Activated naive CD8-positive, alpha-beta T cell treated with anti-CD3 and anti-CD28 coated beads, Interleukin-2, amount 10 ng/mL, durations not matched to agents 7 days and 5 days (primary cell): ENCODE measurements at regions of chr9 and their contacts with region 1.

Region 1: DNA sequence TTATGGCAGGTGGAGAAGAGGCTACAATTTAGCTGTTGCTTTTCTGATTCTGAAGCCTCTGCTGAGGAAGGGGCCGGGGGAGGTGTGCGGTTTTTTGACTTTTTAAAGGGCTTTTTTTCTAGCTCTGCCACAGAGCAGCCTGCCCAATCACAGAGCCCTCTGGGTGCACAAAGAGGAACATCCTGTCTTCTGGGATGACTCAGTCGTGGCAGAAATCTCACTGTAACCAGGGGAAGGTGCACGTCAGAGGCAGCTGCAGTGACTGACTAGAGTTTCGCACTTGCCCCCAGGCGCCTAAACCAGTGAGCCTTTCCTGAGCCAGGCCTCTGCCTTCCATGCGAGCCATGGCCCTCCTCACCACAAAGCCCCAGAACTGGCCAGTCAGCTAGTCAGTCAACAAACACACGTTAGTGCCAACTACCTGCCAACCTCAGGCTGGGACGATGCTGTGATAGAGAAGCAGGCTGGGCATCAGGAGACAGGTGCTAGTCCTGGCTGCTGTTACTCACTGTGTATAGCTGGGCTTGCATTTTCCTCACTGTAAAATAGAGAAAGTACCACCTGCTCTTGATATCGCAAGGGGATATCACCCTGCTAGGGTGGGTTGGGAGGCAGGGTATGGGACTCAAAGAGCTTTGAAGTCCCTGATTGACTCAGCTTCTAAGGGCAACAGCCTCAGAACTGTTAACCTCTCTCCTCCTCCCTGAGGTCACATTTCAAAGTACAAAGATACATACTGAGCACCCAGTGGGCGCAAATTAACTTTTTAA is 2.2 kb downstream of the AKNA start:
- DNase-seq: peak; percentile 82
- ATAC-seq: peak; percentile 78
- H3K4me3 Mint-ChIP-seq: peak overlapping the region; percentile 99
- H3K27ac Mint-ChIP-seq: peak overlapping the region; percentile 99
- H3K4me1 Mint-ChIP-seq: peaks cover 48% of the 10 kb centered on the region
- H3K27me3 Mint-ChIP-seq: no peaks in the 10 kb centered on the region

Region 2: DNA sequence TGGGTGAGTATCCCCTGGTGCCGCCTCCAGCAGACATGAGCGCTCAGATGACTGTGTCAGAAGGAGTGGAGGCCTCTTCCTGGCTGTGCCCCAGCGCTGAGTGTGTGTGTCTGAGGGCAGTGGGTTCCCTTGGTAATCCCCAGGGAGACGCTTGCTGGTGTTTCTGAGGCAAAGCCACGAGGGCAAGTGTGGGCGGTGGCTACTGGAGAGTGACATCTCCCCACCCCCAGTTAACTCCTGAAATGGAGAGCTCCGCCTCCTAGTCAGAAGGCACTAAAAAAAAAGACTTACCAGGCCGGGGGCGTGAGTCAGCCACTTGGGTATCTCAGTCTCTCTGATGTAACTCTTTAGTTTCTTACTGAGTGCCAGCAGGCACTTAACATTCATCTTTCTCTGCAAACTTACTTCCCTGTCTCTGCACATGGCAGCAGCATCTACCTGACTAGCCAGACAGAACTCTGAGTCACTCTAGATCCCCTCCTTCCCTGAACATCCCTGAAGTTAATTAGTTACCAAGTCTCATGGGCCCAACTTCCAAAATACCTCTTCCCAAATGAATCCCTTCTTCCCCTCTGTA is 36.6 kb before region 1 on chr9:
- POLR2A ChIA-PET with region 1: interaction called, 137 read pairs
- DNase-seq: peak; percentile 65
- ATAC-seq: peak; percentile 77
- H3K4me3 Mint-ChIP-seq: peak overlapping the region; percentile 62
- H3K27ac Mint-ChIP-seq: peak overlapping the region; percentile 95
- H3K4me1 Mint-ChIP-seq: peaks cover 51% of the 10 kb centered on the region
- H3K27me3 Mint-ChIP-seq: no peaks in the 10 kb centered on the region

Region 3: GRCh38 chr9:114372921-114373448 is 12.6 kb before region 1 on chr9:
- POLR2A ChIA-PET with region 1: interaction called, 637 read pairs
- DNase-seq: peak; percentile 80
- ATAC-seq: peak; percentile 86
- H3K4me3 Mint-ChIP-seq: peak overlapping the region; percentile 83
- H3K27ac Mint-ChIP-seq: peak overlapping the region; percentile 87
- H3K4me1 Mint-ChIP-seq: peaks cover 79% of the 10 kb centered on the region
- H3K27me3 Mint-ChIP-seq: no peaks in the 10 kb centered on the region

Region 4: DNA sequence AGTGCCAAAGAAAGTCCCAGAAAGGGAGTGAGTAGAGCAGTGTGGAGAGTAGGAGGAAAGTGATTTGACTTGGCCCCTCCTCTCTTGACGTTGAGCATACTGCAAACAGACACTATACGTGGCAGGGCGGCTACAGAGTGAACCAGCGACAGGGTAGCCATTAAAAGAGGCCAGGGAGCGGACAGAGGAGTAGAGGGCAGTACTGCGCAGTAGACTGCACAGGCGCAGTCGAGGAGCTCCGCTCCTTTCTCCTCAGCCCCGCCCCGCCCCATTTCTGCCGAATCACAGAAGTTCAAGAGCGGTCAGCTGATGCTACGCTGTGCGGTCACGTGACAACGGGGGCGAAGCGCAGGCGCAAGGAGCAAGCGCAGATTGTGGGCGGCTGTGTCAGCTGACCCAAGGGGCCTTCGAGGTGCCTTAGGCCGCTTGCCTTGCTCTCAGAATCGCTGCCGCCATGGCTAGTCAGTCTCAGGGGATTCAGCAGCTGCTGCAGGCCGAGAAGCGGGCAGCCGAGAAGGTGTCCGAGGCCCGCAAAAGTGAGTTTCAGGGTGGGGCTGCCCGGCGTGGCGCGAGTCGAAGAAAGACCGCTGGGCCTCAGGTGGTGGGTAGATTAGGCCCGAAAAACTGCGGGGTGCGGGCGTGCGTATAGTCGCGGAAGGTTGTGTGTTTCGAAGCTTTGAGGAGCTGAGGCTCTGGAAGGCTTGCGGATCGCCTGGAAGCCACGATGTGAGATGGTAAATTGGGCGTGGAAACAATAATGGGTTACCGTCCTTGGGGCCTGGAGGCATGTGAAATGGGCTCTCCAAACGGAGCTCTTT is 202.0 kb after region 1 on chr9 and contains the start of gene ATP6V1G1:
- POLR2A ChIA-PET with region 1: interaction called, 17 read pairs
- DNase-seq: peak; percentile 97
- ATAC-seq: peak; percentile 95
- H3K4me3 Mint-ChIP-seq: peak within 1 kb of the TSS; percentile 98
- H3K27ac Mint-ChIP-seq: peak within 1 kb of the TSS; percentile 96
- H3K4me1 Mint-ChIP-seq: peaks cover 43% of the 10 kb centered on the region
- H3K27me3 Mint-ChIP-seq: peaks cover 2% of the 10 kb centered on the region
- total RNA-seq, gene ATP6V1G1: 95.8 to 96.7 TPM